ENCODE measurements at regions of chr6 and their contacts with region 1.

Region 1: GRCh38 chr6:128713461-128713860 is 169.5 kb upstream of the LAMA2 start:
- DNase-seq: no peak
- H3K4me3 ChIP-seq: no peak overlapping the region
- H3K27ac ChIP-seq: no peak overlapping the region
- H3K4me1 ChIP-seq: no peaks in the 10 kb centered on the region
- H3K27me3 ChIP-seq: no peaks in the 10 kb centered on the region
- CTCF ChIP-seq: no peak
- EP300 ChIP-seq: no peak
- POLR2A ChIP-seq: no peak
- RAD21 ChIP-seq: no peak

Region 2: GRCh38 chr6:128731249-128732165 is 18.0 kb after region 1 on chr6:
- CTCF ChIA-PET with region 1: interaction called, 18 read pairs
- POLR2A ChIA-PET with region 1: no interaction called
- DNase-seq: no peak
- H3K4me3 ChIP-seq: no peak overlapping the region
- H3K27ac ChIP-seq: no peak overlapping the region
- H3K4me1 ChIP-seq: peaks cover 0 to 4% (median 0%) of the 10 kb centered on the region in 4 experiments; a peak in 1 of 7 replicates
- H3K27me3 ChIP-seq: no peaks in the 10 kb centered on the region
- CTCF ChIP-seq: peak in 2 of 3 experiments; percentile 63 to 68; a peak in 3 of 4 replicates
- EP300 ChIP-seq: no peak
- POLR2A ChIP-seq: no peak
- RAD21 ChIP-seq: peak; percentile 93 to 94

Measured in H1 (cell line).